ENCODE measurements at regions of chr17 and their contacts with region 1.

Region 1: DNA sequence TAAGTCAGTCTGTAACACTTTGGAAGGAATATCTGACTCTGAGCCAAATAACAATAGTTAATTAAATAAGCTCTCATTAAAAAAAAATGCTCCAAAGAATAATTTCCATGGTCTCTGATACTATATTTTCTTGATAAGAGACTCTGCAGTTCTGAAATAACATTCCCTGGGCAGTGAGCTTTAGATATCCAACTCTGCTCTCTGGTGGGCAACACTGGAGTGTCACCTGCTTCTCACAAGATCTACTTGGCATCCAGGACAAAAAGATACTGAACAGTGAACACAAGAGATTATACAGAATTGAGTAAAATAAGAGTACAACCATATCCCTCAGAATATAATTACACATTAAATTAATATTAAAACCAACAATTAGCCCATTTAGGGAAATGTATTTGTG is 13.7 kb downstream of the BLMH start:
- DNase-seq: peak in 1 of 4 experiments; percentile 39
- ATAC-seq: peak; percentile 73
- H3K4me3 ChIP-seq: no peak overlapping the region
- H3K27ac ChIP-seq: no peak overlapping the region
- H3K4me1 ChIP-seq: no peaks in the 10 kb centered on the region
- H3K27me3 ChIP-seq: no peaks in the 10 kb centered on the region
- CTCF ChIP-seq: peak; percentile 32 to 60 (median 45); a peak in 5 of 6 replicates
- EP300 ChIP-seq: no peak
- POLR2A ChIP-seq: no peak
- RAD21 ChIP-seq: peak; percentile 61 to 71

Region 2: DNA sequence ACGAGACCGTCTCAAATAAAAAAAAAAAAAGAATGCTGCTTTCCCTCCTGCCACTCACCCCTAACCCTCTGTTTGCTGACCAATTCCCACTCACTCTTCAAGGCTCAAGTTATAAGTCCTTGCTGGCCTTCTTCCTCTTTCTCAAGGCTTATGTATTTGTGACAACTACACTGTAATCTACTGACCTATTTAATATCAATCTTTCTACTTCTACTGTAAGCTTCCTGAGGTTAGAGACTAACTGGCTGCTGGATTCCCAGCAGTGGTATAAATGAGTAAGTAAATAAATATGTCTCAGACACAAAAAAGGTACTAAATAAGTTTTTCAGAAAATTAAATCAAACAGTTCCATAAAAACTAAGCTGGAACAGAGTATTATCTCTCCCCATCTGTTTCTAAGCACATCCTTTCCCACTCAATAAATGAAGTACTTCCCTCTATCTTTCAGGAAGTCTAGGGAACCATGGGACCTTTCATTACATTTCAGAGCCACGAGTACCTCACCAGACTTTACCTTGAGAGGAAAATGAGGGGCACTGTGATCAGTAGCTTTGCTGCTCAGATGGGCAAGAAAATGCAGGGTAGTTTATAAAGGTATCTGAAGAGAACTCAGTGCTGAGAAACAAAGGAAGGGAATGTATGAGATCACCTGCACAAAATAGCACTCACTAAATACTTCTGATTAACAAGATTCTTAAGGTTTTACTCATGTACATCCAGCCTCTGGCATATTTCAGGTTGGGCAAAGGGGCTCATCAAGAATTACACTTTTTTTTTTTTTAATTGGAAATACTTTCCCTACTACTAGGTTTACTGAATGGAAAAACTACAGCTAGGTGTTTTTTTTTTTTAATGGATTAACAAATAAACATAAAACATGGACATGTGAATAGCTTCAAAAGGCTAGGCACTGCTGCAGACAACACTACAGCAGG is 358.8 kb before region 1 on chr17:
- CTCF ChIA-PET with region 1: no interaction called
- POLR2A ChIA-PET with region 1: no interaction called
- in situ Hi-C with region 1: no loop called
- intact Hi-C with region 1: no loop called
- DNase-seq: no peak
- ATAC-seq: no peak
- H3K4me3 ChIP-seq: no peak overlapping the region
- H3K27ac ChIP-seq: peak overlapping the region; percentile 15; the same call in 1 of the 3 replicates
- H3K4me1 ChIP-seq: no peaks in the 10 kb centered on the region; a peak in 1 of 5 replicates
- H3K27me3 ChIP-seq: no peaks in the 10 kb centered on the region
- CTCF ChIP-seq: no peak
- EP300 ChIP-seq: no peak
- POLR2A ChIP-seq: no peak
- RAD21 ChIP-seq: no peak

Region 3: DNA sequence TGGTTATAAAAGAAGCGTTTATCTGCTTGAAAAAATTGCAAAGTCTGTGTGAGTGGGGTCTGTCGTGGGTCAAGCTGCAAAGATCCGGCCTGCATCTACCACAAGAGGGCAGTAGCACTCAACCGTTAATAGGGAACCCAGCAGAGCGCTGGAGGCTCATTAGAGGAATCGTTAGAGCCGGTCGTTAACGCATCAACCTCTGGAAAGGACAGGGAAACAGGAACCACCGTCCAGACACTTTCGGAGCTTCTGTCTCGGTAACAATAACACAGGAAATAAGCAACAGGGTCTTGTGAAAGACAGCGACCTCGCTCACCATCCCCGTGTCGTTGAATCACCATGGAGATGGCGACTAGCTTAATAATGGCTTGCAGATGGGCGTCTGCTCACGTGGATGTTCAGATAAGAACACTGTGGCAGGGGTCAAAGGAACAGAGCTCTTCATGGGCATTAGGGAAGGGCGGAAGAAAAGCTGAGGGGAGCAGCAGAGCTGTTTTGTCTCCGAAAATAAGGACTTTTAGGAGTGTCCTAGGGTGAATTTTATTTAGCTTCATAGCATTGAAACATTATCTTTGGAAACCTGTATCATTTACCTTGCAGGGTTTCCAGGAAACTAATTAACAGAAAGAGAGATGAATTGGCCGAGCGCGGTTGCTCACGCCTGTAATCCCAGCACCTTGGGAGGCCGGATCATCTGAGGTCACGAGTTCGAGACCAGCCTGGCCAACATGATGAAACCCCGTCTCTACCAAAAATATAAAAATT is 173.3 kb before region 1 on chr17:
- CTCF ChIA-PET with region 1: interaction called, 27 read pairs
- POLR2A ChIA-PET with region 1: no interaction called
- in situ Hi-C with region 1: no loop called
- intact Hi-C with region 1: loop called (anchors 1 kb)
- DNase-seq: peak; percentile 82 to 93 (median 85)
- ATAC-seq: peak; percentile 99
- H3K4me3 ChIP-seq: peak overlapping the region; percentile 38
- H3K27ac ChIP-seq: peak overlapping the region; percentile 77
- H3K4me1 ChIP-seq: peaks cover 5% of the 10 kb centered on the region in 2 experiments; a peak in 3 of 5 replicates
- H3K27me3 ChIP-seq: no peaks in the 10 kb centered on the region; a peak in 1 of 5 replicates
- CTCF ChIP-seq: peak; percentile 91 to 95 (median 92)
- EP300 ChIP-seq: peak; percentile 14; the same call in 1 of the 2 replicates
- POLR2A ChIP-seq: peak; percentile 51
- RAD21 ChIP-seq: peak; percentile 89 to 93

Region 4: GRCh38 chr17:30116661-30117551 is 161.1 kb before region 1 on chr17 and contains the start of gene NSRP1:
- CTCF ChIA-PET with region 1: no interaction called
- POLR2A ChIA-PET with region 1: no interaction called
- in situ Hi-C with region 1: loop called (anchors 10 kb)
- intact Hi-C with region 1: no loop called
- DNase-seq: peak; percentile 90 to 98 (median 90)
- ATAC-seq: peak; percentile 94
- H3K4me3 ChIP-seq: peak within 1 kb of the TSS; percentile 61
- H3K27ac ChIP-seq: peak within 1 kb of the TSS; percentile 97
- H3K4me1 ChIP-seq: peaks cover 5 to 10% of the 10 kb centered on the region in 2 experiments; a peak in 3 of 5 replicates
- H3K27me3 ChIP-seq: no peaks in the 10 kb centered on the region
- CTCF ChIP-seq: no peak
- EP300 ChIP-seq: 0 out of 2 replicates have a peak, but pooled peaks have one; percentile 4
- POLR2A ChIP-seq: peak; percentile 99
- RAD21 ChIP-seq: no peak
- polyA plus RNA-seq, gene NSRP1: 52.8 to 54.2 TPM

Region 5: DNA sequence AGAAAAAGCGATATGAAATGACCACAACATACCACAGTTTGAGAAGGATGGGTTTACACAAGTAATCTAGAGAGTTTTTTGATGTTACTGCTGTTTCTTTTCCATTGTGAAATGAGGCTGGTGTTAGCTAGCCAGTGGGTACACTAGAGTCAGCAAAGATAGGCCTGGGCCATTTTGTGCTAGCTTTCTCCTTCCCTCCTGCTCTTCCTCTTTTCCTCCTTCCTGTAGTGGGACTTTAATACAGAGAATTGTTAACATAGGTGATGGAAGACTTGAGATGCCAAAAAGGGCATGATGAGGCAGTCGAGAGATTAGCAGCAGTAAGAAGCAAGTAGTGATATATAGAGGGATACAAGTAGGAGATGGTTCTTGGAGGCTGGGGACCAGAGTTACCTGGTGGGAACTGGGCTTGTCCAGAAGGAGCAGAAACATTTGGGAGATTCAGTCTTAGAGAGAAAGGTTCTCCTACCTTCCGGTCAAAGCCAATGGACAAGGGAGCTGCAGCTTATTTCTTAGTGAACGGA is 153.7 kb before region 1 on chr17:
- CTCF ChIA-PET with region 1: interaction called, 25 read pairs
- POLR2A ChIA-PET with region 1: interaction called, 3 read pairs
- in situ Hi-C with region 1: loop called (anchors 10 kb)
- intact Hi-C with region 1: loop called (anchors 5 kb)
- DNase-seq: no peak
- ATAC-seq: peak; percentile 49; the same call in 2 of the 3 replicates
- H3K4me3 ChIP-seq: no peak overlapping the region
- H3K27ac ChIP-seq: 0 out of 3 replicates have a peak overlapping the region, but pooled peaks have one; percentile 3
- H3K4me1 ChIP-seq: peaks cover 0 to 2% of the 10 kb centered on the region in 2 experiments; a peak in 2 of 5 replicates
- H3K27me3 ChIP-seq: no peaks in the 10 kb centered on the region
- CTCF ChIP-seq: no peak
- EP300 ChIP-seq: no peak
- POLR2A ChIP-seq: no peak
- RAD21 ChIP-seq: no peak

Region 6: GRCh38 chr17:30134551-30134950 is 143.5 kb before region 1 on chr17:
- CTCF ChIA-PET with region 1: no interaction called
- POLR2A ChIA-PET with region 1: no interaction called
- in situ Hi-C with region 1: no loop called
- intact Hi-C with region 1: loop called (anchors 5 kb)
- DNase-seq: no peak
- ATAC-seq: no peak
- H3K4me3 ChIP-seq: no peak overlapping the region
- H3K27ac ChIP-seq: no peak overlapping the region
- H3K4me1 ChIP-seq: peaks cover 0 to 3% of the 10 kb centered on the region in 2 experiments; a peak in 1 of 5 replicates
- H3K27me3 ChIP-seq: no peaks in the 10 kb centered on the region
- CTCF ChIP-seq: no peak
- EP300 ChIP-seq: no peak
- POLR2A ChIP-seq: no peak; the same call in 1 of the 2 replicates
- RAD21 ChIP-seq: no peak

Region 7: GRCh38 chr17:30299000-30299399 is 21.0 kb after region 1 on chr17:
- CTCF ChIA-PET with region 1: no interaction called
- POLR2A ChIA-PET with region 1: no interaction called
- in situ Hi-C with region 1: no loop called
- intact Hi-C with region 1: no loop called
- DNase-seq: no peak
- ATAC-seq: no peak
- H3K4me3 ChIP-seq: no peak overlapping the region
- H3K27ac ChIP-seq: no peak overlapping the region
- H3K4me1 ChIP-seq: 0 out of 5 replicates have a peak, but pooled peaks cover 0 to 2% of the 10 kb centered on the region in 2 experiments
- H3K27me3 ChIP-seq: no peaks in the 10 kb centered on the region
- CTCF ChIP-seq: peak in 2 of 3 experiments; percentile 38 to 44; a peak in 3 of 6 replicates
- EP300 ChIP-seq: no peak
- POLR2A ChIP-seq: no peak
- RAD21 ChIP-seq: peak in 1 of 2 experiments; percentile 28; a peak in 1 of 4 replicates

Measured in K562 (cell line).